ENCODE measurements at regions of chr7 and their contacts with region 1.

Region 1: DNA sequence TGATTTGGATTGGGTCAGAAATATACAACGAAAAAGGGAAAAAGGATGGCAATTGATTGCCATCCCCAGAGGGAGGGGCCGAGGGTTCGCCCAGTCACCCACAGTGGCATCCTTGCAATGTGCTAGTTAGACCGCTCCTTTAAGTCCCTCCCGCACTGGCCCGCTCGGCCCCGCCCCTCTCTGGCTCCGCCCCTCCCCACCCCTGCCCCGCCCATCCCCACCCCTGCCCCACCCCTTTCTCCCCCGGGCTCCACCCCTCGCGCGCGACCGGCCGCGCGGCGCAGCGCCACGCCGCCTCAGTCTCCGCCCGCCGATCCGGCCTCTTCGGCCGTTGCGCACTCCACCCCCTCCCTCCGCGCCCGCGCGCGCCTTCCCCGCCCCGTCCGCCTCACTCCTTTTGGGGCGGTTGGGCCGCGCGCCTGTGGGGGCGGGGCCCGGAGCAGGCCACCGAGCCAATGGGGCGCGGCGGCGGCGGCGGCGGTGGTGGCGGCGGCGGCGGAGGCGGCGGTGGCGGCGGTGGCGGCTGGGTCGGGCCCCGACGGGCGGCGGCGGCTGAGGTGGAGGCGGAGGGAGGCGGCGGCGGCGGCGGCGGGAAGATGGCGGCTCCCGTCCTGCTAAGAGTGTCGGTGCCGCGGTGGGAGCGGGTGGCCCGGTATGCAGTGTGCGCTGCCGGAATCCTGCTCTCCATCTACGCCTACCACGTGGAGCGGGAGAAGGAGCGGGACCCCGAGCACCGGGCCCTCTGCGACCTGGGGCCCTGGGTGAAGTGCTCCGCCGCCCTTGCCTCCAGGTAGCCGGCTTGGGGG is at the start of gene VKORC1L1:
- DNase-seq: peak; percentile 96 to 99 (median 97)
- ATAC-seq: peak; percentile 94 to 99 (median 98)
- H3K4me3 ChIP-seq: peak within 1 kb of the TSS; percentile 63 to 99 (median 83)
- H3K27ac ChIP-seq: peak within 1 kb of the TSS in 11 of 12 donors; percentile 58 to 85 (median 78)
- H3K4me1 ChIP-seq: peaks cover 0 to 20% (median 8%) of the 10 kb centered on the region in 12 donors
- H3K27me3 ChIP-seq: no peaks in the 10 kb centered on the region
- CTCF ChIP-seq: no peak
- POLR2A ChIP-seq: peak in 1 of 2 donors; percentile 52
- total RNA-seq, gene VKORC1L1: 13.8 to 24.9 (median 18.6) TPM

Region 2: DNA sequence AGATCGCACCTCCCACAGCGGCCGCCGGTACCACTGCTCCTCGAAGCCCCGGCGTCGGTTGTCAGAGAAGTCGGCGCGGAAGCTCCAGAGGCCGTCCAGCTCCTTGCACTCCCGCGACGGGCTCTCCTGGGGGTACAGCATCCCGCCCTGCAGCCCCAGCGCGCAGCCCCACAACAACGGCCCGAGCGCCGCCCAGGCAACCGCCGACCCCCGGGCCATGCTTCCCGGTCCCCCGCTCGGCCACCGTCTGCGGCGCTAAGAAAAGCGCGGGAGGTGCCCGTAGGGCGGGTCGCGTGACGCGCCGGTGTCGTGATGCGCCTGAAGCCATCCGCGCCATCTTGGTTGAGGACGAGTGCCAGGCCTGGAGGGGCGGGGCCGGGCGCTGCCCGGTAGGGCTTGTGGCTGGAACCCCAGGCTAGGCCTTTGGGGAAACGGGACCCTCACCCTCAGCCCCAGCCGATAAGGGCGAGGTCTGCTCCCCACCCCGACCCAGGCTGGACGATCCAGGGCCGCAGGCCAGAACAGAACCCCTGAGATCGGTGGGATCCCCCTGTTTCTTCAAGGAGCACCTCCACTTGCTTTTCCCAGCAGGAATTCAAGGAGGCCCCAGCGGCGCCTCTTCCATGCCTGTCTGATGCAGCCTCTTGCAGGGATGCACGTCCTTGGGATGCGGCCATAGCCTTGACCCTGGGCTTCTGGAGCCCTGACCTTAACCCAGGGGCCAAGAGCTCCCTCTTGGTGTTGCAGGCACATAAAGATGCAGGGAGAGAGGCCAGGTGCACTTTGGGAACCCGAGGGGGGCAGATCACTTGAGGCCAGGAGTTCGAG is 109.2 kb after region 1 on chr7 and contains the start of gene GUSB:
- intact Hi-C with region 1: loop called in 1 of 10 experiments (anchors 10 kb)
- DNase-seq: peak; percentile 92 to 96 (median 94)
- ATAC-seq: peak; percentile 92 to 98 (median 96)
- H3K4me3 ChIP-seq: peak within 1 kb of the TSS; percentile 66 to 99 (median 84)
- H3K27ac ChIP-seq: peak within 1 kb of the TSS; percentile 14 to 92 (median 85)
- H3K4me1 ChIP-seq: peaks cover 0 to 24% (median 16%) of the 10 kb centered on the region in 12 donors
- H3K27me3 ChIP-seq: no peaks in the 10 kb centered on the region
- CTCF ChIP-seq: no peak
- POLR2A ChIP-seq: peak in 1 of 2 donors; percentile 87
- total RNA-seq, gene GUSB: 9.9 to 47.3 (median 14.9) TPM